SK-N-SH (cell line): ENCODE measurements at regions of chr17 and their contacts with region 1.

Region 1: DNA sequence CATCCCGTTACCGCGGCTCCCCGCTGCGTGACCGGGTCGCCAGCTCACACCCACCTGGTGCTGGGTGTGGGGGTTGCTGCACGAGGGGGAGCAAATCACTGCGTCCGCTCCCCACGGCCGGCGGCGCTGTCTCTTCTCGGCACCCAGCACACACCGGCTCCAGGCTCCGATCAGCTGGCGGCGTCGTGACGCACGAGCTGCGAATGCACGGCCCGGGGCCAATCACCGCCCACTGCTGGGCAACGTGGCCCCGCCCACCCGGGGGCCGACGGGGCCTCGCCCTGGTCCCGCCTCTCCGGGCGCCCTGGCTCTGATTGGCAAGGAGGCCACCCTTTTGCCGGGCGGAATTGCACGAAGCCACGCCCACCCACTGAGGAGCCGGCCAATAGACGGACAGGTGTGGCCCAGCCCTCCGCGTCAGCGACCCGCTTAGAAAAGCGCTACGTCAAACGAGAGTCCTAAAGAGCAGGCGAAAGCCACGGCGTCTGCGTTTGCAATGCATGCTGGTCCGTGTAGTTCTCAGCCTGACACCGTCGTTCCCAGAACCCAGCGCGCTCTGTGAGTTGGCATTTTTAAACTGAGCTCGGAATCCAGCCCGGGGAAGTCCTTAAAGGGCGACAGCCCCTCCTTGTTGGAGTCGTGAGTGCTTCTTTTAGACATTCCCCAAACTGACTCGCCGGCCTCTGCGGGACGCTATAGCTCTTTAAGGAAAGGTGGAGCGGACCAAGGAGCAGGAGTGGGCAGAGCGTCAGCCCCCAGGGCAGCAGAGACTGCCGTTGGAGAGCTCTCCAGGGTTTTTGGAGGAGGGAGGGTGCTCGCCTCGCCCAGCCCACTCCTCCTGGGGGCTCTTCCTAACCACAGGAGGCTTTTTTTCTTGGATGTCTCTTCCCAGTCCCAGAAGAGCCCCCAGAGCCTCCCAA is 6.2 kb upstream of the TLCD2 start:
- DNase-seq: peak; percentile 100
- H3K4me3 ChIP-seq: peak overlapping the region; percentile 85 to 95
- H3K27ac ChIP-seq: peak overlapping the region; percentile 99 to 100
- H3K4me1 ChIP-seq: peaks cover 12 to 31% of the 10 kb centered on the region in 2 experiments; a peak in 3 of 4 replicates
- H3K27me3 ChIP-seq: no peaks in the 10 kb centered on the region
- CTCF ChIP-seq: peak; percentile 11; the same call in 1 of the 2 replicates
- EP300 ChIP-seq: no peak
- RAD21 ChIP-seq: no peak

Region 2: DNA sequence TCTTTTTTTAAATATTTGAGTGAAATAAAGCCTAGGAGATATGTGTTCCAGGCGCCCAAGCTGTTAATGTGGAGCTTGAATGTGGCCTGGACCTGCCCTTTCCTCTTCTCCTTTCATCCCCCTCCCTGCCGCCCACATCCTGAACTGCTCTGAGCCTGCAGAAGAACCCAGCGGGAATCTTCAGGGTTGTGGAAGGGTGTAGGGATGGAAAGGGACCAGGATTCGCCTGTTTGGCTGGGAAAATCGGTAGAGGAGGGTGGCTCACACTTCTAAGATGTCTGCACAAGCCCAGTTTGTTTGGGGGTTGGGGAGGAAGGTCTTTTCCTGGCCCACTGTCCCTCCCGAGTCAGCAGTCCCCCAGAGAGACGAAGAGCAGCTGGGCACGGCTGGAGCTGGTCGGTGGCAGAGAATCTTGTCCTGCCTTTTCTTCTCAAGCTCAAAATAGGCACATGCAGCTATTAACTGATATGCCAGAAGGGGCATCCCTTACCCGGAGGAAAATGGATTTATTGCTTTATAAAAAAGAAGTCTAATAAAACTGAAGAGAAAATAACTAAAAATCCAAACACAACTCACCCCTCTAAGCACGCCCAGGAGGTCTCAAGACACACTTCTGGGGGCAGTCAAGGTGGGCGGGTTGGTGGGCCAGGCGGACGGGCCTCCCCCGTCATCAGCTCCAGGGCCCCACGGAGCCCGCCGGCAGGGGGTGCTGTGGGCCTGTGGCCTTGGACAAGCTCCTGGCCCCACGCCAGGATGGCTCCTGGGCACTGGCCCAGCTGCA is 142.2 kb before region 1 on chr17:
- CTCF ChIA-PET with region 1: interaction called, 10 read pairs
- POLR2A ChIA-PET with region 1: no interaction called
- DNase-seq: peak; percentile 98
- H3K4me3 ChIP-seq: no peak overlapping the region; a peak in 1 of 4 replicates
- H3K27ac ChIP-seq: no peak overlapping the region
- H3K4me1 ChIP-seq: peaks cover 9 to 10% of the 10 kb centered on the region in 2 experiments; a peak in 1 of 4 replicates
- H3K27me3 ChIP-seq: no peaks in the 10 kb centered on the region
- CTCF ChIP-seq: peak; percentile 94
- EP300 ChIP-seq: no peak
- RAD21 ChIP-seq: peak; percentile 78

Region 3: GRCh38 chr17:1673041-1673785 is 43.1 kb before region 1 on chr17:
- CTCF ChIA-PET with region 1: interaction called, 10 read pairs
- POLR2A ChIA-PET with region 1: interaction called, 3 read pairs
- DNase-seq: no peak
- H3K4me3 ChIP-seq: no peak overlapping the region
- H3K27ac ChIP-seq: no peak overlapping the region
- H3K4me1 ChIP-seq: peaks cover 0 to 2% of the 10 kb centered on the region in 2 experiments; a peak in 1 of 4 replicates
- H3K27me3 ChIP-seq: no peaks in the 10 kb centered on the region
- CTCF ChIP-seq: no peak
- EP300 ChIP-seq: no peak
- RAD21 ChIP-seq: no peak

Region 4: DNA sequence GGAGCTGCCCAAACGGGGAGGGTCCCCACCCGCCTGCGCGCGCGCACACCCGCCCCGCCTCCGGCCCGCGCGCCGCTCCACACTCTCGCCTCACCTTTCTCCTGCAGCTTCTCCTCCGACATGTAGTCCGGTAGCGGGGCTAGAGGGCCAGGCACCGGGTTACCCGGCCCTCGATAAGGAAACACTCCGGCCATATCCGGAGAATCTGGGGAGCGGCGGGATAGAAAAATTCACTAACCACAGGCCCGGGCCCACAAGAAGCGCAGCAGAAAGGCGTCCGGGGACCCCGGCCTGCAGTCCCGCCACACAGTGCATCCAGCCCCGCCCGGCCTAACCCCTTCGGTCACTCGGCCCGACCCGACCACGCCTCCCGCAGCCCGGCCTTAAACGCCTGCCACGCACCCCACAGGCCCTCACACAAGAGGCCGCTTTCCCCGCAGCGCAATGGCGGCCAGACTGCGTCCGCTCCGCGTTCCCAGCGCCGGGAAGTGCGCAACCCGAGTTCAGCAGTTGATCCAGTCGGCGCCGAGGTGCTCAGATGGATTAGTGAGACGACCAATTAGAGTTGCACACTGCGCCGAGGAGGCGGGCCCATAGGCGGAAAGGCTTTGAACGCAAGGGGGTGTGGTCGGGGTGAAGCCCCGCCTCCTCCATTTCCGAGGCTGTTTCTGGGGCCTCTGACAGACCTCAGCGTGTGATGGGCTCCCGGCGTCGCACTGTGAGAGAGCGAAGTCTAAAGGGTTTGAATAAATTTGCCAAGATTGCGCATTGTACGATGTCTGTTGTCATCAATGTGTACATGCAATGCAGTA is 31.8 kb before region 1 on chr17 and contains the start of gene PRPF8:
- CTCF ChIA-PET with region 1: interaction called, 3 read pairs
- POLR2A ChIA-PET with region 1: interaction called, 10 read pairs
- DNase-seq: peak; percentile 99
- H3K4me3 ChIP-seq: peak within 1 kb of the TSS; percentile 74 to 87
- H3K27ac ChIP-seq: peak within 1 kb of the TSS; percentile 85 to 88
- H3K4me1 ChIP-seq: peaks cover 4 to 9% of the 10 kb centered on the region in 2 experiments; a peak in 2 of 4 replicates
- H3K27me3 ChIP-seq: no peaks in the 10 kb centered on the region
- CTCF ChIP-seq: no peak
- EP300 ChIP-seq: no peak
- RAD21 ChIP-seq: no peak
- polyA plus RNA-seq, gene PRPF8: 123 and 149 TPM in 2 replicates

Region 5: GRCh38 chr17:1764284-1764683 is 47.9 kb after region 1 on chr17:
- CTCF ChIA-PET with region 1: interaction called, 23 read pairs
- POLR2A ChIA-PET with region 1: interaction called, 24 read pairs
- DNase-seq: no peak
- H3K4me3 ChIP-seq: no peak overlapping the region
- H3K27ac ChIP-seq: peak overlapping the region; percentile 51 to 98; a peak in 3 of 4 replicates
- H3K4me1 ChIP-seq: peaks cover 28 to 34% of the 10 kb centered on the region in 2 experiments; a peak in 3 of 4 replicates
- H3K27me3 ChIP-seq: no peaks in the 10 kb centered on the region
- CTCF ChIP-seq: no peak
- EP300 ChIP-seq: no peak
- RAD21 ChIP-seq: no peak

Region 6: GRCh38 chr17:1783834-1784611 is 67.7 kb after region 1 on chr17:
- CTCF ChIA-PET with region 1: interaction called, 112 read pairs
- POLR2A ChIA-PET with region 1: interaction called, 9 read pairs
- DNase-seq: peak; percentile 78
- H3K4me3 ChIP-seq: no peak overlapping the region; a peak in 1 of 4 replicates
- H3K27ac ChIP-seq: peak overlapping the region in 1 of 2 experiments; percentile 18; a peak in 2 of 4 replicates
- H3K4me1 ChIP-seq: peaks cover 14 to 26% of the 10 kb centered on the region in 2 experiments; a peak in 3 of 4 replicates
- H3K27me3 ChIP-seq: no peaks in the 10 kb centered on the region
- CTCF ChIP-seq: peak; percentile 77
- EP300 ChIP-seq: no peak
- RAD21 ChIP-seq: peak; percentile 85

Region 7: GRCh38 chr17:1793447-1793806 is 77.1 kb after region 1 on chr17:
- CTCF ChIA-PET with region 1: interaction called, 112 read pairs
- POLR2A ChIA-PET with region 1: interaction called, 4 read pairs
- DNase-seq: no peak
- H3K4me3 ChIP-seq: no peak overlapping the region
- H3K27ac ChIP-seq: peak overlapping the region in 1 of 2 experiments; percentile 77; a peak in 2 of 4 replicates
- H3K4me1 ChIP-seq: peaks cover 8 to 19% of the 10 kb centered on the region in 2 experiments; a peak in 2 of 4 replicates
- H3K27me3 ChIP-seq: no peaks in the 10 kb centered on the region
- CTCF ChIP-seq: no peak
- EP300 ChIP-seq: 0 out of 4 replicates have a peak, but pooled peaks of 1 of the 2 experiments have one; percentile 1
- RAD21 ChIP-seq: no peak